Activated CD8-positive, alpha-beta T cell treated with anti-CD3 and anti-CD28 coated beads for 36 hours (primary cell): ENCODE measurements at regions of chr11 and their contacts with region 1.

Region 1: GRCh38 chr11:44927174-44927661 is 23.5 kb downstream of the TP53I11 start:
- DNase-seq: peak; percentile 65
- ATAC-seq: peak; percentile 77
- H3K4me3 Mint-ChIP-seq: no peak overlapping the region
- H3K27ac Mint-ChIP-seq: no peak overlapping the region
- H3K4me1 Mint-ChIP-seq: no peaks in the 10 kb centered on the region
- H3K27me3 Mint-ChIP-seq: no peaks in the 10 kb centered on the region
- CTCF ChIP-seq: peak; percentile 93

Region 2: GRCh38 chr11:44793350-44794090 is 133.7 kb before region 1 on chr11:
- CTCF ChIA-PET with region 1: no interaction called
- POLR2A ChIA-PET with region 1: no interaction called
- intact Hi-C with region 1: no loop called
- DNase-seq: no peak
- ATAC-seq: no peak
- H3K4me3 Mint-ChIP-seq: no peak overlapping the region
- H3K27ac Mint-ChIP-seq: no peak overlapping the region
- H3K4me1 Mint-ChIP-seq: no peaks in the 10 kb centered on the region
- H3K27me3 Mint-ChIP-seq: no peaks in the 10 kb centered on the region
- CTCF ChIP-seq: no peak

Region 3: GRCh38 chr11:44911029-44911814 is 16.0 kb before region 1 on chr11:
- CTCF ChIA-PET with region 1: interaction called, 18 read pairs
- POLR2A ChIA-PET with region 1: no interaction called
- intact Hi-C with region 1: no loop called
- DNase-seq: peak; percentile 94
- ATAC-seq: peak; percentile 89
- H3K4me3 Mint-ChIP-seq: no peak overlapping the region
- H3K27ac Mint-ChIP-seq: no peak overlapping the region
- H3K4me1 Mint-ChIP-seq: peaks cover 4% of the 10 kb centered on the region
- H3K27me3 Mint-ChIP-seq: peaks cover 2% of the 10 kb centered on the region
- CTCF ChIP-seq: peak; percentile 68

Region 4: GRCh38 chr11:44916801-44917385 is 10.3 kb before region 1 on chr11:
- CTCF ChIA-PET with region 1: interaction called, 18 read pairs
- POLR2A ChIA-PET with region 1: no interaction called
- intact Hi-C with region 1: no loop called
- DNase-seq: no peak
- ATAC-seq: no peak
- H3K4me3 Mint-ChIP-seq: no peak overlapping the region
- H3K27ac Mint-ChIP-seq: no peak overlapping the region
- H3K4me1 Mint-ChIP-seq: no peaks in the 10 kb centered on the region
- H3K27me3 Mint-ChIP-seq: peaks cover 2% of the 10 kb centered on the region
- CTCF ChIP-seq: no peak

Region 5: DNA sequence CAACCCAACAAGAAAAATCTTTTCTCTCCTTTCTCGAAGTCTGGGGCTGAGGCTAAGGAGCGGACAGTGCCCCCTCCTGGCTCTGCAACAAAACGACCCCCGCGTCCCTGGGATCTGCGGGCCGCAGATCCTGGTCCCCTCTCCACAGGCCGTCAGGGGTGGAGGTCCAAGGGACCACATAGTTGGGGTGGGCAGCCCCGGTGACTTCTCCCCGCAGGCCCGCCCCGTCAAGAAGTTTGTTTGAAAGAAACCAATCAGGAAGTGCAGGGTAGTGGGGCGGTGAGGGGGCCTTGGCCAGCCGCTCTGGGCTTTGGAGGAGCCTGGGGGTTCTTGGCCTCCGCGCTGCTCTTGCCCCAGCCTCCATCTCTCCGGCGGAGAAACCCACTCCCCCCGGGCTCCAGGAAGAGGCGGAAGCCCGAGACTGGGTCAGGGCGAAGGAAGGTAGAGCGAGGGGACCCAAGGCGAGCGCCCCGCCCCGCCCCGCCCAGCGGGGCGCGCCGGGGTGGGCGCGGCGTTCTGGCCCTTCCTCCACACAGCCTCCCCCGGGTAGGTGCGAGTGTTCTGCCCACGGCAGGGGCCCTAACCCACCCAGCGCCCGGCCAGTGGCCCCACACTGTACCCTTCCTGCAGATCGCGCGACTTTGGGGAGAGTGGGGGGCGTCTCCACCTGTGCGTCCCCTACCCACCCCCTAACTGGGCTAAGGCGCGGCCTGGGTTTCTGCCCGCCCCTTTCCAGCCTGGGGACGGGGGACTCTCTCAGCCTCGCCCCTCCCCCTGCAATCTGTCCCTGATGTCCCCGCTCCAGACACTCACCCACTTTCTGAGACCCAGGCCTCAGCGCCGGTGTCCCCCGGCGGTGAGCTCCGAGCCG is 22.2 kb after region 1 on chr11:
- CTCF ChIA-PET with region 1: interaction called, 10 read pairs
- POLR2A ChIA-PET with region 1: no interaction called
- intact Hi-C with region 1: no loop called
- DNase-seq: peak; percentile 44
- ATAC-seq: peak; percentile 35
- H3K4me3 Mint-ChIP-seq: peak overlapping the region; percentile 75
- H3K27ac Mint-ChIP-seq: no peak overlapping the region
- H3K4me1 Mint-ChIP-seq: peaks cover 15% of the 10 kb centered on the region
- H3K27me3 Mint-ChIP-seq: no peaks in the 10 kb centered on the region
- CTCF ChIP-seq: peak; percentile 58

Region 6: GRCh38 chr11:44979543-44980399 is 52.6 kb after region 1 on chr11:
- CTCF ChIA-PET with region 1: interaction called, 13 read pairs
- POLR2A ChIA-PET with region 1: no interaction called
- intact Hi-C with region 1: no loop called
- DNase-seq: no peak
- ATAC-seq: no peak
- H3K4me3 Mint-ChIP-seq: no peak overlapping the region
- H3K27ac Mint-ChIP-seq: no peak overlapping the region
- H3K4me1 Mint-ChIP-seq: peaks cover 17% of the 10 kb centered on the region
- H3K27me3 Mint-ChIP-seq: no peaks in the 10 kb centered on the region
- CTCF ChIP-seq: no peak

Region 7: DNA sequence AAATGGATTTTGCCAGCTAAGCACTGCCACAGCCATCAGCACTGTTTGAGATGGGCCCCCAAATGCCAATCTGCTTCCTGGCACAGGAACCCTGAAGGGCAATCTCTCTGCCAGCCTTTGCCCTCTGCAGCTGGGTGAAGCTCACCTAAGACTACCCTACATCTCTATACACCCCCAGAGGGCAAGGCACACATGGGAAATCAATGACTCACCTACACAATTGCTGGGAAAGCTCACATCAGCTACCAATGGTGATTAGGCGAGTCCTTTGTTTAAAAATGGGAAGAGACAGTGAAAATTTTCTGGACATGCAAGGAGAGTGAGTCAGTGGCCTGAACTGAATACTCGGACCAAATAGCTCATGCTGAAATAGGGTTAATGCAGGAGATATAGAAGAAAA is 206.7 kb after region 1 on chr11:
- CTCF ChIA-PET with region 1: interaction called, 14 read pairs
- POLR2A ChIA-PET with region 1: no interaction called
- intact Hi-C with region 1: no loop called
- DNase-seq: no peak
- ATAC-seq: no peak
- H3K4me3 Mint-ChIP-seq: no peak overlapping the region
- H3K27ac Mint-ChIP-seq: no peak overlapping the region
- H3K4me1 Mint-ChIP-seq: no peaks in the 10 kb centered on the region
- H3K27me3 Mint-ChIP-seq: peaks cover 29% of the 10 kb centered on the region
- CTCF ChIP-seq: no peak